Right cardiac atrium (tissue), 5 donors: ENCODE measurements at regions of chr7 and their contacts with region 1.

Region 1: DNA sequence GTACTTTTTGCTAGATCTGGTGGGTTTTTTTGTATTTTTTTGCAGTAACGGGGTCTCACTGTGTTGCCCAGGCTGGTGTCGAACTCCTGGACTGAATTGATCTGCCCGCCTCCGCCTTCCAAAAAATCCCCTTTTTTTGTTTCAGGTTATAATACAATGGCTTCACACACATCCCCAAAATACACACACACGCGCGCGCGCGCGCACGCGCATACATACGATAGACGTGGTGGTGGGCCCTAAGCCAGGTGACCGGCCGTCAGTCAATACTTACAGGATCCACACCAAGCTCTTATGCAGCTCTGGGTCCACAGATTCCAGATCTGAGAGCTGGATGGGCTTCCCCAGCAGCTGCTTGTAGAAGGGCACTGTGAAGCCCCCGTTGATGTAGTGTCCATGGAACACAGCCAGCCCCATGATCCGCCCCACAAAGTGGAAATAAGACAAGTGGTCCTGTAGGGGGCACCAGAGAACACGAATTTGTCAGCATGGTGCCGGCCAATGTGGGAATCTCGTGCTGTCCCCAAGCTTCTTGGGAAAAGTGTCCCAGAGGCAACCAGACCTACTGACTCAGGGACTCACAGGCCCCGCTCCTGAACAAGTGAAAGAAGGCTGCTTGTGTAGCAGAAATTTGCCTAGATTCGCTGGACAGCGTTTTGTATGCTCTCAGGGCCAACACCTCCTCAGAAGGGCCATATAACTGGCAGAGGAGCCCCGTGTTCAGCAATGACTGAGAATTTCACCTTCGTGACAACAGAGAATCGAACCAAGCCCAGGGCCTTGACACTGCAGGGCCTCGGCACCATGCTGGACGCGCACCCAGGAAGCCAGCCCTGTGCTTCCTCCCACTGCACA is 103.6 kb downstream of the SMURF1 start:
- DNase-seq: peak; percentile 83 to 87 (median 85)
- ATAC-seq: peak; percentile 74 to 76
- H3K4me3 ChIP-seq: no peak overlapping the region
- H3K27ac ChIP-seq: peak overlapping the region; percentile 54
- H3K4me1 ChIP-seq: no peaks in the 10 kb centered on the region
- H3K27me3 ChIP-seq: no peaks in the 10 kb centered on the region

Region 2: GRCh38 chr7:99143853-99144672 is 103.7 kb after region 1 on chr7 and contains the start of gene SMURF1:
- intact Hi-C with region 1: loop called in 2 of 4 experiments (anchors 10 kb)
- DNase-seq: peak; percentile 68 to 90 (median 90)
- ATAC-seq: peak; percentile 65 to 74
- H3K4me3 ChIP-seq: peak within 1 kb of the TSS; percentile 100
- H3K27ac ChIP-seq: peak within 1 kb of the TSS; percentile 99
- H3K4me1 ChIP-seq: peaks cover 5% of the 10 kb centered on the region
- H3K27me3 ChIP-seq: no peaks in the 10 kb centered on the region
- total RNA-seq, gene SMURF1: 9.2 to 14.7 (median 9.7) TPM

Region 3: DNA sequence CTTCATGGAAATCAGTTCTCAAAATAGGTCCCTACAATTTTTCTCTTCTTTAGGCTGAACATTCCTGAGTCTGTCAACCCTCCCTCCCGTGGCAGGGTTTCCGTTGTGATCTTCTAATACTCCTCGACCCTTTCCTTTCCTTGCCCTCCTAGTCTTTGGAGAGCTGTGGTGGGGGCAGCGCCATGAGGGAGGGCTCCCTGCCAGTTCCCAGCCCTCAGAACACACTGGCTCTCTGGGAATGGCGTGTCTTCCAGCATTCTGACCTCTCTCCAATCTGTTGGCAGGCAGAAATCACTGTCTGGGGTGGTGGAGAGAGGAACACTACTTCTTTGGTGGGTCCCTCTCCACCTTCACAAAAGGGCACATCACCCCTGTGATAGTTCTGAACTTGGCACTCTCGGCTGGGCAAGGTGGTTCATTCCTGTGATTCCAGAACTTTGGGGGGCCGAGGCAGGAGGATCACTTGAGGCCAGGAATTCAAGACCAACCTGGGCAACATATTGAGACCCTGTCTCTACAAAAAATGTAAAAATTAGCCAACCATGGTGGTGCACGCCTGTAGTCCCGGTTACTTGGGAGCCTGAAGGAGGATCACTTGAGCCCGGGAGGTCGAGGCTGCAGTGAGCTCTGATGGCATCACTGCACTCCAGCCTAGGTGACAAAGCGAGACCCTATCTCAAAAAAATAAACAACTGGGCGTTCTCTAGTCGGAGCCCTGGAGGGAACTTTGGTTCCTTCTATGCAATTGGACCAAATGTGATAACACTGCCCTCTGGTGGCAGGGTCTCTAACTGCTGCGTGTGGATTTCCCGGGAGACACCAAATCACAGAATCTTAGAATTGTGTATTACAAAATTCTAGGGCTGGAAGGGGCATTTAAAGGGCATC is 272.2 kb after region 1 on chr7:
- intact Hi-C with region 1: loop called (anchors 2 to 5 kb)
- DNase-seq: peak; percentile 53 to 85 (median 79)
- ATAC-seq: peak; percentile 65 to 74
- H3K4me3 ChIP-seq: no peak overlapping the region
- H3K27ac ChIP-seq: no peak overlapping the region
- H3K4me1 ChIP-seq: peaks cover 5% of the 10 kb centered on the region
- H3K27me3 ChIP-seq: no peaks in the 10 kb centered on the region